ENCODE measurements at regions of chr20 and their contacts with region 1.

Region 1: GRCh38 chr20:49610701-49611538 is 43.0 kb upstream of the PTGIS start:
- DNase-seq: peak; percentile 84 to 87 (median 85)
- ATAC-seq: peak; percentile 71 to 75 (median 73)
- H3K4me3 ChIP-seq: peak overlapping the region in 2 of 3 donors; percentile 26 to 28
- H3K27ac ChIP-seq: no peak overlapping the region
- H3K4me1 ChIP-seq: peaks cover 0 to 27% (median 4%) of the 10 kb centered on the region in 4 donors
- H3K27me3 ChIP-seq: no peaks in the 10 kb centered on the region
- CTCF ChIP-seq: peak; percentile 98 to 100 (median 98)
- POLR2A ChIP-seq: no peak

Region 2: GRCh38 chr20:49063279-49063678 is 547.6 kb before region 1 on chr20:
- intact Hi-C with region 1: no loop called
- DNase-seq: no peak
- ATAC-seq: no peak
- H3K4me3 ChIP-seq: no peak overlapping the region
- H3K27ac ChIP-seq: no peak overlapping the region
- H3K4me1 ChIP-seq: no peaks in the 10 kb centered on the region
- H3K27me3 ChIP-seq: no peaks in the 10 kb centered on the region
- CTCF ChIP-seq: no peak
- POLR2A ChIP-seq: no peak

Region 3: DNA sequence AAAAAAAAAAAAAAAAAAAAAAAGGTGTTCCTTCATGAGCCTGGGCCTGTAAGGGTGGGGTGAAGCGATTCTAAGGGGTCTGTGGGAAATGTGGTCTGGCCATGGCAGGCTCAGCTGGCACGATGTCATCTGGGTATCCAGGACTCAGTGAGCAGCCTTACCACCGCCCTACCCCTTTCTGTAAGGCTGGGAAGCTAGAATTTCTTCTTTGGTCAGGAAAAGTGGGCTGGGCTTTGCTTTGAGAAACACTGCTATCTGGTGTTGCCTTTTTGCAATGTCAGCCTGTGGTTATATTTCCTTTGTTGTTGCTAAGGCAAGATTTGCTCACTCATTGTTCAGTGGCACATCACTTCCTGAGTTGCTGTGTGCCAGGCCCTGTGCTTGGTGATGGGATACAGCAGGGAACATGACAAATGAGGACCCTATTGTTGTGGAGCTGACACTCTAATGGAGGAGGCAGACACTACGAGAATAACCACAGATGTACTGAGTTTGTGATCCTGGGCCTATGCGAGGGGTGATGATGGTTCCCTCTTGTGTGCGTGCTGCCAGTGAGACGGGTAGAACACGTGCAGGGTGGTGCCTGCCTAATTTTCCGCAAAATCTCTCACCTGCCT is 287.2 kb before region 1 on chr20:
- intact Hi-C with region 1: loop called in 1 of 2 experiments (anchors 10 kb)
- DNase-seq: no peak
- ATAC-seq: peak; percentile 62 to 83 (median 74)
- H3K4me3 ChIP-seq: no peak overlapping the region
- H3K27ac ChIP-seq: no peak overlapping the region
- H3K4me1 ChIP-seq: peaks cover 0 to 3% (median 0%) of the 10 kb centered on the region in 4 donors
- H3K27me3 ChIP-seq: peaks cover 0 to 17% of the 10 kb centered on the region in 2 donors
- CTCF ChIP-seq: peak in 3 of 4 donors; percentile 18 to 32 (median 27)
- POLR2A ChIP-seq: no peak

Region 4: GRCh38 chr20:49338061-49338460 is 272.9 kb before region 1 on chr20:
- intact Hi-C with region 1: loop called in 1 of 2 experiments (anchors 10 kb)
- DNase-seq: no peak
- ATAC-seq: no peak
- H3K4me3 ChIP-seq: no peak overlapping the region
- H3K27ac ChIP-seq: no peak overlapping the region
- H3K4me1 ChIP-seq: no peaks in the 10 kb centered on the region
- H3K27me3 ChIP-seq: no peaks in the 10 kb centered on the region
- CTCF ChIP-seq: no peak
- POLR2A ChIP-seq: no peak

Region 5: DNA sequence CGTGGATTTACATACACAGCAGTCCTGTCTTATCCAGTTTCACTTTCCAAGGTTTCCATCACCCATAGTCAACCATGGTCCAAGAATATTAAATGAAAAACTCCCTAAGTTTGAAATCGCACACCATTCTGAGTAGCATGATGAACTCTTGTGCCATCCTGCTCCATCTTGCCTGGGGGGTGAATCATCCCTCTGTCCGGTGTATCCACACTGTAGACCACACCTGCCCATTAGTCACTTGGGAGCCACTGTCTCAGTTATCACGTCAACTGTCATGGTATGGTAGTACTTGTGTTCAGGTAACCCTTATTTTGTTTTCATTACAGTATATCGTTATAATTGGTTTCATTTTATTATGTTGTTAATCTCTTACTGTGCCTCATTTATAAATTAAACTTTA is 81.5 kb before region 1 on chr20:
- intact Hi-C with region 1: no loop called
- DNase-seq: no peak
- ATAC-seq: no peak
- H3K4me3 ChIP-seq: no peak overlapping the region
- H3K27ac ChIP-seq: no peak overlapping the region
- H3K4me1 ChIP-seq: no peaks in the 10 kb centered on the region
- H3K27me3 ChIP-seq: no peaks in the 10 kb centered on the region
- CTCF ChIP-seq: no peak
- POLR2A ChIP-seq: no peak

Region 6: DNA sequence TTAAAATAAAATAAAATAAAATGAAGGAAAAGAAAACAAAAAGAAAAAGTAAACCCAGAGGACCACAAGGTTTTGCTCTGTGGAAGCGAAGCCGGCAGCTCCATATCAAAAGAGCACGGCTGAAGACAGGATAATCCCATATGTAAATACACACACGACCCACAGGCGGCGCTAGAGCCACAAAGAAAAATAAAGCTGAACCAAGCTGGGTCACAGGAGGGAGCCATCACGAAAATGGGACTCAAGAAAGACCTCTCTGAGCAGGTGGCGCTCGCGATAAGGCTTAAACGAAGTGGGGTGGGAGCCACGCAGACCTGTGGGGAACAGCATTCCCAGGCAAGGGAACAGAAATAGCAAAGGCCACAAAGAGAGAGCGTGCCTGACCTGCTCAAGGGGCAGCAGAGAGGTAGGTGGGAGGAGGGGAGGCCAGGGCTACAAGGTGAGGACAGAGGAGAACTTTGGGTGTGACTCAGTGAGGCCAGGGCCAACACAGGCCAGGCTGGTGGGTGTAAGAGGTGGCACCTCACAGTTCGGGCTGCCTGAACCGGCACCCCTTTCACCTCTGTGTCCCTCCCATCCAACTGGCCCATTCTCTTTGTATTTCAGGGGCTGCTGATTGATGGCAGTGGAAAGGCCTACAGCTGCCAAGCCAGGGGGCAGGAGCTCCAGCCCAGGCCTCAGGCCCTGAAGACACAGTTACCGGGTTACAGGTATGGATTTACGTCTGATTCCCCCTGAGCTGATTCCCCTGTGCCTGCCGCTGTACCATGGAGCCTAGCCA is 69.0 kb before region 1 on chr20:
- intact Hi-C with region 1: loop called (anchors 2 to 5 kb)
- DNase-seq: peak in 2 of 3 donors; percentile 62 to 79
- ATAC-seq: peak; percentile 76 to 93 (median 90)
- H3K4me3 ChIP-seq: no peak overlapping the region
- H3K27ac ChIP-seq: no peak overlapping the region
- H3K4me1 ChIP-seq: no peaks in the 10 kb centered on the region
- H3K27me3 ChIP-seq: no peaks in the 10 kb centered on the region
- CTCF ChIP-seq: peak; percentile 83 to 95 (median 88)
- POLR2A ChIP-seq: no peak

Region 7: GRCh38 chr20:49685809-49686208 is 74.9 kb after region 1 on chr20:
- intact Hi-C with region 1: loop called in 1 of 2 experiments (anchors 10 kb)
- DNase-seq: no peak
- ATAC-seq: peak in 1 of 4 donors; percentile 11
- H3K4me3 ChIP-seq: no peak overlapping the region
- H3K27ac ChIP-seq: peak overlapping the region in 1 of 3 donors; percentile 62
- H3K4me1 ChIP-seq: peaks cover 0 to 82% (median 26%) of the 10 kb centered on the region in 4 donors
- H3K27me3 ChIP-seq: no peaks in the 10 kb centered on the region
- CTCF ChIP-seq: no peak
- POLR2A ChIP-seq: no peak

Region 8: GRCh38 chr20:49729721-49730138 is 118.8 kb after region 1 on chr20:
- intact Hi-C with region 1: no loop called
- DNase-seq: no peak
- ATAC-seq: no peak
- H3K4me3 ChIP-seq: no peak overlapping the region
- H3K27ac ChIP-seq: no peak overlapping the region
- H3K4me1 ChIP-seq: peaks cover 0 to 4% (median 0%) of the 10 kb centered on the region in 4 donors
- H3K27me3 ChIP-seq: no peaks in the 10 kb centered on the region
- CTCF ChIP-seq: no peak
- POLR2A ChIP-seq: no peak

Region 9: DNA sequence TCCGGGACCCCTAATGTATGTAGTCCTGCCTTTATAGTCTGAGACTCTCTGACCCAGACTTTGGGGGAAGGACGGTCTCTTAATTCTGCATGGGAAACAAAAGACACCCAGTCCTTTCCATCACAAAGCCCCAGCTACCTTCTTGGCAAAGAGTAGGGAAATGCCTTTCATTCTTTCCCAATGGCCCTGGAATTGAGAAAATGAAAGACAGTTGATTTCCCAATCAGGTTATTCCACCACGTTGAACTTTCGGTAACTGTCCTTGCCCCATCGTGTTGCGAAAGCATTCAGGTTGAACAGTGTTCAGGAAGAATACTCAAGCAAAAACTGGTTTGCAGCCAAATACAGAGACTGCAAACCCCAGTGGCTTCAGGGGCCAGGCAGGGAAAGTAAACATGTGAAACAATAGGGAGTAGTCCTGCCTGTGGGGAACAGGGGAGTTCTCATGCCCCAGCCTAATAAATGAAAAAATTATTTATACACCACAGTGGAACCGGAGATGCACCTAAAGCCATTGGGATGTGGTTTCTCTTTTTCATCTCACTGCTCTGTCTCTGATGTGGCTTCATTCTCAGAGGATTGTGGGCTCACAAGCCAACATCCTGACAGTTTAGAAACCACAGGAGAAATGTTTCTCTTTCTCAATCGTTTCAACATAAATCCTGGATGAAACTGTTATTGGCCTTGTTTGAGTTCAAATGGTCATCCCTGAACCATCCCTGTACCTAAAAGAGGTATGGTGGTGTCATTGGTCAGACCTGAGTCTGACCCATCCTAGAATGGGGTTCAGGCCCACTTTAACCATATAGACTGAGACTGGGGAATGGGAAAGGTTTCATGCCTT is 157.5 kb after region 1 on chr20:
- intact Hi-C with region 1: loop called in 1 of 2 experiments (anchors 10 kb)
- DNase-seq: peak; percentile 69 to 91 (median 77)
- ATAC-seq: peak; percentile 68 to 85 (median 78)
- H3K4me3 ChIP-seq: peak overlapping the region in 1 of 3 donors; percentile 10
- H3K27ac ChIP-seq: peak overlapping the region; percentile 63 to 80 (median 71)
- H3K4me1 ChIP-seq: peaks cover 0 to 89% (median 47%) of the 10 kb centered on the region in 4 donors
- H3K27me3 ChIP-seq: no peaks in the 10 kb centered on the region
- CTCF ChIP-seq: no peak
- POLR2A ChIP-seq: peak; percentile 25

Region 10: GRCh38 chr20:49846206-49846807 is 235.4 kb after region 1 on chr20:
- intact Hi-C with region 1: loop called (anchors 5 to 10 kb)
- DNase-seq: no peak
- ATAC-seq: peak; percentile 92 to 94 (median 94)
- H3K4me3 ChIP-seq: no peak overlapping the region
- H3K27ac ChIP-seq: peak overlapping the region in 1 of 3 donors; percentile 7
- H3K4me1 ChIP-seq: peaks cover 0 to 5% (median 0%) of the 10 kb centered on the region in 4 donors
- H3K27me3 ChIP-seq: no peaks in the 10 kb centered on the region
- CTCF ChIP-seq: peak; percentile 68 to 73 (median 70)
- POLR2A ChIP-seq: no peak

Measured in right lobe of liver (tissue), 6 donors.